ENCODE measurements at regions of chr21 and their contacts with region 1.

Region 1: DNA sequence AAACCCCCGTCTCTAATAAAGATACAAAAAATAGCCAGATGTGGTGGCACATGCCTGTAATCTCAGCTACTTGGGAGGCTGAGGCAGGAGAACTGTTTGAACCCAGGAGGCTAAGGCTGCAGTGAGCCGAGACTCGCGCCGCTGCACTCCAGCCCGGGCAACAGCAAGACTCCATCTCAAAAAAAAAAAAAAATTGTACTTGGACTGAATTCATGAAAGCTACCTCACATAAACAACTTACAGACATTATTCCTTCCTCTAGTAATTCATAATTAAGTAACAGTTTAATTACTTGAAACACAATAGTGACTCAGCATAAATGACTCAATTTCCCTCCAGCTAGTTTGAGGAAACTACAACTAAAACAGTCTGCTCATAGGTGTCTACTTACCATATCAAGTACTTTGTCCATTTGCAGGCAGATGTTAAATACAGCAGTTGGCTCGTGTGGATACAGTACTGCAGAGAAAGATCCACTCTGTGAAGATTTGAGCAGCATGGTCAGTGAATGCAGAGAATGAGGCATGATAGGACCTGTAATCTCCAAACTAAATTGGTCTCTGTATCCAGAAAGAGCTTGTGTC is 9.4 kb downstream of the DONSON start:
- DNase-seq: peak; percentile 48
- H3K4me3 Mint-ChIP-seq: no peak overlapping the region
- H3K27ac Mint-ChIP-seq: no peak overlapping the region
- H3K4me1 Mint-ChIP-seq: no peaks in the 10 kb centered on the region
- H3K27me3 Mint-ChIP-seq: no peaks in the 10 kb centered on the region
- CTCF ChIP-seq: no peak

Region 2: GRCh38 chr21:32653311-32653901 is 925.6 kb before region 1 on chr21:
- CTCF ChIA-PET with region 1: no interaction called
- POLR2A ChIA-PET with region 1: no interaction called
- intact Hi-C with region 1: no loop called
- DNase-seq: peak; percentile 27
- H3K4me3 Mint-ChIP-seq: no peak overlapping the region
- H3K27ac Mint-ChIP-seq: no peak overlapping the region
- H3K4me1 Mint-ChIP-seq: no peaks in the 10 kb centered on the region
- H3K27me3 Mint-ChIP-seq: no peaks in the 10 kb centered on the region
- CTCF ChIP-seq: peak; percentile 58

Region 3: DNA sequence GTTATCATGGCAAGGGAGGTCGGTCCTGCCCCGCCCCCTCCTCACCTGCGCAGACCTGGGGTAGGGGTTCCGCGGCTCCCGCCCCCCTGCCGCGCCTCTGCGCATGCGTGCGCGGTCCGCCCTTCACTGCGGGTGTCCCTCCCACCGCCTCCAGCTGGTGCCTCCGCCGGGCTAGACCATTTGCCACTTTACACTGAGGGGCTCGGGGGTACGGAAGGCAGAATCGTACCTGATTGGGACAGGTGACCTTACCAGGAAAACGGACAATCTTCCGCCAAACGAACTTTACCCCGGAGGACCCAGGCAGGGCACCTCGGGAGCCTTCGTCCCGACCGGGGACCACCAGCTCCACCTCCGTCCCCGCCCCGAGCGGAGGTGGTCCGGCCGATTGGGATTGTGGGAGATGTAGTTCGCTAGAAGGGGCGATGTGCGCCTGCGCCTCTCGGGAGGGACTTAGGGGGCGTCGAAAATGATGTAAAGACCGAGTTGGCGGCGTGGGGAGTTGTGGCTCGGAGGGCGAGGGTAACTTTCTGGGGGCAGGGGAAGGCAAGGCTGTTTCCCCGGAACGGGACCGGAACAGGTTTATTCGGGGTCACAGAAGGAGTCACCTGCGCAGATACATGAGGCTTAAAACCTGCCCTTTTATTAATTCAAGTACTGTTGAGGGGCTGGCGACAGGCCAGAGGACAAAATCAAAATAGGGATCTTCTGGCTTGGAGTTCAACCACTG is 87.5 kb before region 1 on chr21 and contains the start of gene DNAJC28:
- CTCF ChIA-PET with region 1: no interaction called
- POLR2A ChIA-PET with region 1: no interaction called
- intact Hi-C with region 1: no loop called
- DNase-seq: peak; percentile 89
- H3K4me3 Mint-ChIP-seq: peak within 1 kb of the TSS; percentile 96
- H3K27ac Mint-ChIP-seq: peak within 1 kb of the TSS; percentile 87
- H3K4me1 Mint-ChIP-seq: peaks cover 7% of the 10 kb centered on the region
- H3K27me3 Mint-ChIP-seq: no peaks in the 10 kb centered on the region
- CTCF ChIP-seq: no peak
- total RNA-seq, gene DNAJC28: 0.28 and 0.39 TPM in 2 replicates

Region 4: DNA sequence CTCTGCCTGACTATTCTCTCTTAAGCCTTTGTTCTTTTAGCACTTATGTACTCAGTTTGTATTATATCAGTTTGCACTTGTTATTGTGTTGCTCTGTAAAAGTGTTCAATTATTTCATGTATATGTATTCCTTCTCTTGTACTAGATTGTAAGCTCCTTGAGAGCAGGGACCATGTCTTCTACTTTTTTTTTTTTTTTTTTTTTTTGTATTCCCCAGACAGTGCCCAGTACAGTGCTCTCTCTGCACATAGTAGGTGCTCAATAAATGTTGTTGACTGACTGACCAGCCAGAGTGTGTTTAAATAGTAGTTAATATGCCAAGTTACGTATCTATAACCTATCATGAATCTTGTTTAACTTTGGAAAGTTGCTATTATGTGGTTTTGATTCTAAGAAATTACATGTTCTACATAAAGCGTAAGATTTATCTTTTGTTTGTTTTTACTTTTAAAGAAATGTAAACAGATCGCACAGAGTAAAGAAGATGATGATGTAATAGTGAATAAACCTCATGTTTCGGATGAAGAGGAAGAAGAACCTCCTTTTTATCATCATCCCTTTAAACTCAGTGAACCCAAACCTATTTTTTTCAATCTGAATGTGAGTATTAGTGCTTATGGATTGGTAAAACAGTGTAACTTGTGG is 20.2 kb before region 1 on chr21:
- CTCF ChIA-PET with region 1: interaction called, 10 read pairs
- POLR2A ChIA-PET with region 1: interaction called, 8 read pairs
- intact Hi-C with region 1: no loop called
- DNase-seq: no peak
- H3K4me3 Mint-ChIP-seq: no peak overlapping the region
- H3K27ac Mint-ChIP-seq: no peak overlapping the region
- H3K4me1 Mint-ChIP-seq: peaks cover 24% of the 10 kb centered on the region
- H3K27me3 Mint-ChIP-seq: no peaks in the 10 kb centered on the region
- CTCF ChIP-seq: no peak

Region 5: DNA sequence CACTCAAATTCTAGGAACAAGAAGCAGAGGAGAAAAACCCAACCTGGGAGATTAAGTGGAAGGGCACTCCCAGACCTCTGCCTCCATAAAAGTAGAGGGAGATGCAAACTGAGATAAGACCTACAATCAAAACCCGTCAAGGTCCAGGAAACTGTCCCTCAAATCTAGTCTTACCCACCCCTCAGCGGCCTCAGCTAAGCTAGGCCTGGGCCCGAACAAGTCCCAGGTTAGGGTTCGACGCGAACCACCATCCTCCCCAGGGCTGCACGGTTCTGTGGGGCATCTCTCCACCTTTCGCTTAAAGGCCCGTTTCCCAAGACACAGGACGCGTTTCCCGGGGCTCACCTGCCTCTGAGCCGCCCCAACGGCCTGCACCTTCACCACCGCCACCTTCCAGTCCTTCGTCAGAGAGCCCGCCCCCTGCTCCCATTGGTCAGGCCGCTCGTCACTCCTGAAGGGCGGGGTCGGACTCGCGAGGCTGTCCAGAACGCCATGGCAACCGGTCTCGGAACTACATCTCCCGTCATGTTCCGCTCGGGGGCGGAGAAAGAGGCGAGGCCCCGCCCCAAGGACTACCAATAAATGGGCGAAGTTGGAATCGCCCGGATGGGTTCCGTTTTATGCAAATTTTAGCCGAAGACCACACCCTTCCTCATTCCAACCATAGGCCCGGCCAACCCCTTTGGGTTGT is 62.4 kb after region 1 on chr21 and contains the start of gene CRYZL1:
- CTCF ChIA-PET with region 1: no interaction called
- POLR2A ChIA-PET with region 1: no interaction called
- intact Hi-C with region 1: no loop called
- DNase-seq: peak; percentile 100
- H3K4me3 Mint-ChIP-seq: peak within 1 kb of the TSS; percentile 71
- H3K27ac Mint-ChIP-seq: peak within 1 kb of the TSS; percentile 82
- H3K4me1 Mint-ChIP-seq: peaks cover 24% of the 10 kb centered on the region
- H3K27me3 Mint-ChIP-seq: no peaks in the 10 kb centered on the region
- CTCF ChIP-seq: no peak
- total RNA-seq, gene CRYZL1: 35.2 and 40.0 TPM in 2 replicates